CD4-positive, alpha-beta memory T cell (primary cell): ENCODE measurements at regions of chr19 and their contacts with region 1.

Region 1: GRCh38 chr19:1592755-1593500 is at the start of gene MBD3:
- DNase-seq: peak; percentile 83 to 90 (median 88)
- H3K4me3 ChIP-seq: peak within 1 kb of the TSS; percentile 30 to 86
- H3K4me3 Mint-ChIP-seq: peak within 1 kb of the TSS; percentile 87 to 93 (median 89)
- H3K27ac ChIP-seq: peak within 1 kb of the TSS; percentile 88
- H3K27ac Mint-ChIP-seq: peak within 1 kb of the TSS; percentile 90 to 96 (median 92)
- H3K4me1 ChIP-seq: peaks cover 24% of the 10 kb centered on the region
- H3K4me1 Mint-ChIP-seq: peaks cover 9 to 26% (median 15%) of the 10 kb centered on the region in 4 donors
- H3K27me3 ChIP-seq: no peaks in the 10 kb centered on the region
- H3K27me3 Mint-ChIP-seq: no peaks in the 10 kb centered on the region
- total RNA-seq, gene MBD3: 56.9 to 62.8 TPM

Region 2: DNA sequence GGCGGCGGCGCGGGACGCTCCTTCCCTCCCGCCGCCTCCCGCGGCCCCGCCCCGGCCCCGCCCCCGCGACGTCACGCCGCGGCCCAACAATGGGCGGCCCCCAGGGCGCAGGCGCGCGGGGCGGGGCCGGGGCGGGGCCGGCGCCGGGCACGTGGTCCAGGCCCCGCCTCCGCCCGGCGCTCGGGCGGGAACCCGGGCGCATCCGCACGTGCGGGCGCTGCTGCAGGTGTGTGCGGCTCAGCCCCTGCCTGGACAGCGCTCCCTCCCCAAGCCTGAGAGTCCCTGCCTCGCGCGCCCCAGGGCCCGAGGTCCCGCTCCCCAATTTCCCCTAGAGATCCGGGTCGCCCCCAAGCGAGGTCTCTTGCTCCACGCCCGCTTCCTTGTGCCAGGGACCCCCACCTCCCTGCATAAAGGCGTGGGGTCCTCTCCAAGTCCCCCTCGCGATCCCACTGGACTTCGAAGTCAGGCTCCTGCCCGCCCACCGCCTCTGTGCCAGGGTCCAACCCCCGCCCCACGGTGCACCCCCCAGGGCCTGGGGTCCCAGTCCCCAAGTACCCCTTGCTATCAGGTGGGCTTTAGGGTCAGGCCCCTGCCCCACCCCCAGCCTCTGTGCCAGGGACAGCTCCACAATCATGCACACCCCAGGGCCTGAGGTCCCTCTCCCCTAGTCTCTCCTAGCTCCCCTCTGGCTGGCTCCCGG is 24.5 kb before region 1 on chr19 and contains the start of gene MEX3D:
- CTCF ChIA-PET with region 1: no interaction called
- POLR2A ChIA-PET with region 1: interaction called, 5 read pairs
- intact Hi-C with region 1: loop called (anchors 1 kb)
- DNase-seq: peak; percentile 70 to 82 (median 80)
- H3K4me3 ChIP-seq: no peak within 1 kb of the TSS
- H3K4me3 Mint-ChIP-seq: peak within 1 kb of the TSS in 6 of 8 donors; percentile 26 to 76 (median 46)
- H3K27ac ChIP-seq: no peak within 1 kb of the TSS
- H3K27ac Mint-ChIP-seq: peak within 1 kb of the TSS in 3 of 7 donors; percentile 23 to 77 (median 25)
- H3K4me1 ChIP-seq: peaks cover 7% of the 10 kb centered on the region
- H3K4me1 Mint-ChIP-seq: peaks cover 2 to 11% (median 3%) of the 10 kb centered on the region in 4 donors
- H3K27me3 ChIP-seq: no peaks in the 10 kb centered on the region
- H3K27me3 Mint-ChIP-seq: peaks cover 2% of the 10 kb centered on the region in 2 donors
- total RNA-seq, gene MEX3D: 4.5 to 4.9 TPM

Region 3: GRCh38 chr19:1652471-1653299 is 59.8 kb after region 1 on chr19 and contains the start of gene TCF3:
- CTCF ChIA-PET with region 1: interaction called, 3 read pairs
- POLR2A ChIA-PET with region 1: interaction called, 51 read pairs
- intact Hi-C with region 1: loop called (anchors 1 kb)
- DNase-seq: peak; percentile 98 to 100 (median 100)
- H3K4me3 ChIP-seq: peak within 1 kb of the TSS; percentile 36 to 84
- H3K4me3 Mint-ChIP-seq: peak within 1 kb of the TSS; percentile 84 to 95 (median 89)
- H3K27ac ChIP-seq: peak within 1 kb of the TSS; percentile 99
- H3K27ac Mint-ChIP-seq: peak within 1 kb of the TSS; percentile 94 to 99 (median 96)
- H3K4me1 ChIP-seq: peaks cover 17% of the 10 kb centered on the region
- H3K4me1 Mint-ChIP-seq: peaks cover 5 to 22% (median 13%) of the 10 kb centered on the region in 4 donors
- H3K27me3 ChIP-seq: no peaks in the 10 kb centered on the region
- H3K27me3 Mint-ChIP-seq: peaks cover 1 to 6% of the 10 kb centered on the region in 2 donors
- total RNA-seq, gene TCF3: 72.0 to 75.7 TPM